Colonic mucosa (tissue), 4 donors: ENCODE measurements at regions of chr2 and their contacts with region 1.

Region 1: GRCh38 chr2:164841719-164842623 is at the start of gene COBLL1:
- DNase-seq: peak; percentile 91
- H3K4me3 ChIP-seq: peak within 1 kb of the TSS; percentile 57
- H3K27ac ChIP-seq: peak within 1 kb of the TSS; percentile 96
- H3K4me1 ChIP-seq: no peaks in the 10 kb centered on the region
- H3K27me3 ChIP-seq: no peaks in the 10 kb centered on the region
- CTCF ChIP-seq: peak; percentile 81
- total RNA-seq, gene COBLL1: 20.7 to 23.9 TPM

Region 2: DNA sequence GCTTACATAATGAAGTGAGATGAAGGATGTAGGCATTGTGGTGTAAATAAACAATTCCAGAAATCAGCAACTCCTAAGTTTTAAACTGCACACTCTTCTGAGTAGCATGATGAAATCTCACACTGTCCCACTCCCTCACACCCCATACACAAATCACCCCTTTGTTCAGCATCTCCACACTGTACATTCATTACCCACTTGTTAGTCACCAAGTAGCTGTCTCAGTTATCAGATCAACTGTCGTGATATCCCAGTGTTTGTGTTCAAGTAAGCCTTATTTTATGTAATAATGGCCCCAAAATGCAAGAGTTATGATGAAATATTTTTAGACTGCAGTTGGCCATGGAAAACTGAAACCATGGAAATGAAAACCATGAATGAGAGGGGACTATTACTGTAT is 356.4 kb before region 1 on chr2:
- intact Hi-C with region 1: no loop called
- DNase-seq: no peak
- H3K4me3 ChIP-seq: no peak overlapping the region
- H3K27ac ChIP-seq: no peak overlapping the region
- H3K4me1 ChIP-seq: no peaks in the 10 kb centered on the region
- H3K27me3 ChIP-seq: no peaks in the 10 kb centered on the region
- CTCF ChIP-seq: no peak

Region 3: DNA sequence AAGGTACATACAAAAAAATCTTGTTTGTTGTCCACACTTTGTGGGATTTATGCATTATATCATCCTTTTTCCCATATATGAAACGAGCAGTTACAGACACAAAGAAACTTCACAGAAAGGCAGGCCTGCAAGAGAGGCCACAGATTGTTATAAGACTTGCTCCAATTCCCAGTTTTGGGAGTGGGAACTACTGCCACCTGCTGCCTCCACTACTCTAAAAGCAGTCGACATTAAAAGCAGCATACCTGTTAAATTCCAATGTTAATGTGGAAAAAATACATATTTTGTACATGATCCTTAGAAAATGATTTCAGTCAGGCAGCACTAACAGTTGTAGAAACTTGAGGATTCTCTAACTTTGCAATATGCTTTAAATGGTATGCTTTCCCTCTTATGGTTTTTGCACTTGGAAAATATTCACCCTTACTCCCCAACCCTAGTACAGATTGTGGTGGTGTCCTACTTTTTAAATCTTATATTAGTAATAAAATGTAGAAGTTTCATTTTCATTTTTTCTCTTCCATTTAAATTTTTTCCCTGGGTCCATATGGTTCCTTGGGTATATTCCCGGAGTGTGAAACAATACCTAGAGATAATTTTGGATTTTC is 75.4 kb after region 1 on chr2:
- intact Hi-C with region 1: loop called (anchors 10 kb)
- DNase-seq: peak; percentile 40
- H3K4me3 ChIP-seq: no peak overlapping the region
- H3K27ac ChIP-seq: no peak overlapping the region
- H3K4me1 ChIP-seq: no peaks in the 10 kb centered on the region
- H3K27me3 ChIP-seq: no peaks in the 10 kb centered on the region
- CTCF ChIP-seq: peak; percentile 22

Region 4: GRCh38 chr2:165055082-165055851 is 213.3 kb after region 1 on chr2:
- intact Hi-C with region 1: no loop called
- DNase-seq: no peak
- H3K4me3 ChIP-seq: no peak overlapping the region
- H3K27ac ChIP-seq: no peak overlapping the region
- H3K4me1 ChIP-seq: no peaks in the 10 kb centered on the region
- H3K27me3 ChIP-seq: no peaks in the 10 kb centered on the region
- CTCF ChIP-seq: no peak

Region 5: GRCh38 chr2:165203689-165204559 is 362.0 kb after region 1 on chr2 and contains the start of gene SCN3A:
- intact Hi-C with region 1: no loop called
- DNase-seq: peak; percentile 20
- H3K4me3 ChIP-seq: no peak within 1 kb of the TSS
- H3K27ac ChIP-seq: no peak within 1 kb of the TSS
- H3K4me1 ChIP-seq: no peaks in the 10 kb centered on the region
- H3K27me3 ChIP-seq: no peaks in the 10 kb centered on the region
- CTCF ChIP-seq: peak; percentile 57
- total RNA-seq, gene SCN3A: 0.40 to 0.80 TPM